Heart left ventricle (tissue), 16 donors: ENCODE measurements at regions of chr13 and their contacts with region 1.

Region 1: DNA sequence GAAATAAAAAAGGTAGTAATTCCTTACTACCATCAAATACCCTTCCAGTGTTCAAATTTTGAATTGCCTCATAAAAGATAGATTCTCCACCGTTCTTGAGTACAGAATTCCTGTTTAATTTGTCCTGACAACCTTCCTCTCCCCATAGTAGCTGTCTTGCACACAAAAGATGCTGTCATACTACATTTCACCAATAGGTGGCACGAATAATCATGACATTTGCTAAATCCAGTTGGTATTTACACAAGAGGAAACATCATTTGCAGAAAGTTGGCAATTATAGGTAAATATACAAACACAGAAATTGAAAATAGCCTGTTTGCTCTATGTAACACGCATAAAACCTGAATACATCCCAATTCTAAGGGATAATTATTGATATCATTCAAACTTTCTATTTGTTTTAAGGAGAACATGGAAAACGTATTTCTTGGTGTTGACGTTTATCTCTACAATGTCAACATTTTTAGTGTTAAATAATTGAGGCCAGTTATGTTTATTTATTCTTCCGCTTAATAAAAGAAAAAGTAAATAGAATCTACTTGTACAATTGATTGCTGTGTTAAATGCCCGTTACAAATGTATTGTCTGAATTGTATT is 58.3 kb upstream of the CLDN10 start:
- DNase-seq: no peak
- ATAC-seq: peak in 1 of 4 donors; percentile 45
- H3K4me3 ChIP-seq: no peak overlapping the region
- H3K27ac ChIP-seq: no peak overlapping the region
- H3K4me1 ChIP-seq: peaks cover 0 to 10% (median 3%) of the 10 kb centered on the region in 12 donors
- H3K27me3 ChIP-seq: no peaks in the 10 kb centered on the region
- CTCF ChIP-seq: peak; percentile 45 to 79 (median 66)
- POLR2A ChIP-seq: no peak

Region 2: GRCh38 chr13:94683409-94683808 is 810.8 kb before region 1 on chr13:
- intact Hi-C with region 1: no loop called
- DNase-seq: no peak
- ATAC-seq: no peak
- H3K4me3 ChIP-seq: no peak overlapping the region
- H3K27ac ChIP-seq: no peak overlapping the region
- H3K4me1 ChIP-seq: no peaks in the 10 kb centered on the region
- H3K27me3 ChIP-seq: peaks cover 0 to 38% (median 0%) of the 10 kb centered on the region in 9 donors
- CTCF ChIP-seq: no peak
- POLR2A ChIP-seq: no peak

Region 3: DNA sequence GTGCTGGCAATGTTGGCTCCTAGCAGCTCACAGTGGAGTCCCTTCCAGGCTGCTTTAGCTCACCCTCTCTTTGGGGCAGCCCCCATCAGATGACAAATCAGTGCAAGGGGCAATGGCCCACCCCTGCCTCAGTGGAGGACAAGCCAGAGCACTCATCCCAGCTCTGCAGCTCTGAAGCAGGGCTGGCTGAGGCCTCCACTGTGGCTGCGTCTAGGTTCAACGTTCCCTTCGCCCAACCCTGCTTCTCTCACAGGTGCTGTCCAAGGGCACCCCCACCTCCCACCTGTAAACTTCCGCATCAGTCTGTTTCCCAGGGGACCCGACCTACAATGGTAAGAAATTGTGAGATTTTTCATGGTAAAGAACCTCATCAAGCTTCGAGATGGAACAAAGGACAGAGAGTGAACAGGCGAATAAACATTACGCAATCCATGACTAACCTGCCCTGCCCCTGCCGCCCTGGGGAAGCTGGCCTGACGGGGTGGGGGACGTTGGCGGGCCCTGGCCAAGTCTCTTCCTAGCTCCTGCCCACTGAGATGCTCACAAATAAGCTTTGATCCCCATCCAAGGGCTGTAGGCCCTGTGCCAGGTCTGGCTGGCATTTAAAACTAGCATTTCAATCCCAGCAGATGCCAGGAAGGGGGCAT is 109.8 kb after region 1 on chr13:
- intact Hi-C with region 1: loop called in 1 of 10 experiments (anchors 10 kb)
- DNase-seq: no peak
- ATAC-seq: peak in 2 of 4 donors; percentile 46 to 64
- H3K4me3 ChIP-seq: no peak overlapping the region
- H3K27ac ChIP-seq: no peak overlapping the region
- H3K4me1 ChIP-seq: peaks cover 0 to 9% (median 0%) of the 10 kb centered on the region in 12 donors
- H3K27me3 ChIP-seq: no peaks in the 10 kb centered on the region
- CTCF ChIP-seq: no peak
- POLR2A ChIP-seq: no peak

Region 4: GRCh38 chr13:95624020-95624419 is 129.8 kb after region 1 on chr13:
- intact Hi-C with region 1: loop called in 1 of 10 experiments (anchors 10 kb)
- DNase-seq: no peak
- ATAC-seq: peak in 2 of 4 donors; percentile 34 to 41
- H3K4me3 ChIP-seq: no peak overlapping the region
- H3K27ac ChIP-seq: no peak overlapping the region
- H3K4me1 ChIP-seq: peaks cover 0 to 9% (median 0%) of the 10 kb centered on the region in 12 donors
- H3K27me3 ChIP-seq: no peaks in the 10 kb centered on the region
- CTCF ChIP-seq: peak; percentile 44 to 75 (median 64)
- POLR2A ChIP-seq: no peak

Region 5: GRCh38 chr13:95660981-95661581 is 166.9 kb after region 1 on chr13:
- intact Hi-C with region 1: loop called in 3 of 10 experiments (anchors 5 to 10 kb)
- DNase-seq: peak in 1 of 5 donors; percentile 16
- ATAC-seq: no peak
- H3K4me3 ChIP-seq: no peak overlapping the region
- H3K27ac ChIP-seq: no peak overlapping the region
- H3K4me1 ChIP-seq: no peaks in the 10 kb centered on the region
- H3K27me3 ChIP-seq: peaks cover 0 to 7% (median 0%) of the 10 kb centered on the region in 9 donors
- CTCF ChIP-seq: peak; percentile 39 to 67 (median 52)
- POLR2A ChIP-seq: no peak

Region 6: GRCh38 chr13:95771905-95772304 is 277.7 kb after region 1 on chr13:
- intact Hi-C with region 1: loop called in 1 of 10 experiments (anchors 10 kb)
- DNase-seq: no peak
- ATAC-seq: no peak
- H3K4me3 ChIP-seq: no peak overlapping the region
- H3K27ac ChIP-seq: no peak overlapping the region
- H3K4me1 ChIP-seq: no peaks in the 10 kb centered on the region
- H3K27me3 ChIP-seq: no peaks in the 10 kb centered on the region
- CTCF ChIP-seq: no peak
- POLR2A ChIP-seq: no peak